Aorta (tissue), 5 donors: ENCODE measurements at regions of chr13 and their contacts with region 1.

Region 1: DNA sequence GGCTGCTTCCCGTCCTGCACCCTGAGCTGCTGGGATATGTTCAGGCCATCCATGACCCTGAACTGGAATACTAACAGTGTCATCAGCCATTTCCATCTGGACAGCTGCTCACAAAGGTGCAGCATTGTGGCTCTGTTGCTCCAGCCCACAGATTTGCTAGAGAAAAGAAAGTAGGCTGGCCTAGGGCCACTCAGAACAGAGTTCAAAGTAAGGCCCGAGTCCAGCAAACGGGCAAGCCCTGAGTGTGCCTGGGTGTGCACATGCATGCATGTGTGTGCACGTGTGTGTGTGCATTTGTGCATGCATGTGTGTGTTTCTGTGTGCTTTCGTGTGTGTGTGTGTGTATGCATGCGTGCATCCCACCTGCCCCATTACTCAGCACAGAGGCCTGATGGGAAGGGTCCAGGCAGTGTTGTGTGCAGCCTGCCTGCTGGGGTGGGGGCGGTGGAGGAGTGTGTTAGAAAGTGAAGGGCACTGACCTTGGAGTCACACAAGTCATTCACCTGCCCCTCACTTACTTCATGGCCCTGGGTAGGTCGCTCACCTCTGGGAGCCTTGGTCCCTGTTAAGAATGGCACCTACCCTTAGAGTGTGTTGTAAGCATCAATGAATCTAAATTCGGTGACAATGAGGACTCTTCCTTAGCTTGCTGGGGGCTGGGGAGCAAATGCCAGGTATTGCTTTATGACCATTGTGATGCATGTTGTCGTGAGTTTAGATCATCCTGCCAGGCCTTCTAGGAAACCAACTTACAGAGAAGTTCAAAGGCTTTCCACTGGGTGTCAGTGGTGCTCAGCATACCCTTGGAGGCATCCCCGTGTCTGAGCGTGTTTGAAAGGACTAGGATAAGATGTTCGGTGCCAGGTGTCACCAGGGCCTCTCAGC is 53.2 kb downstream of the GPR12 start:
- DNase-seq: no peak
- ATAC-seq: peak; percentile 56
- H3K4me3 ChIP-seq: no peak overlapping the region
- H3K27ac ChIP-seq: no peak overlapping the region
- H3K4me1 ChIP-seq: no peaks in the 10 kb centered on the region
- H3K27me3 ChIP-seq: no peaks in the 10 kb centered on the region

Region 2: GRCh38 chr13:26646603-26647002 is 60.8 kb before region 1 on chr13:
- intact Hi-C with region 1: no loop called
- DNase-seq: no peak
- ATAC-seq: no peak
- H3K4me3 ChIP-seq: no peak overlapping the region
- H3K27ac ChIP-seq: no peak overlapping the region
- H3K4me1 ChIP-seq: no peaks in the 10 kb centered on the region
- H3K27me3 ChIP-seq: no peaks in the 10 kb centered on the region

Region 3: GRCh38 chr13:26929971-26930730 is 222.8 kb after region 1 on chr13:
- intact Hi-C with region 1: loop called in 1 of 2 experiments (anchors 5 kb)
- DNase-seq: peak; percentile 73 to 93
- ATAC-seq: peak; percentile 75
- H3K4me3 ChIP-seq: no peak overlapping the region
- H3K27ac ChIP-seq: no peak overlapping the region
- H3K4me1 ChIP-seq: no peaks in the 10 kb centered on the region
- H3K27me3 ChIP-seq: no peaks in the 10 kb centered on the region